ENCODE measurements at regions of chr20 and their contacts with region 1.

Region 1: GRCh38 chr20:1509237-1509636 is 18.0 kb upstream of the SIRPB2 start:
- DNase-seq: peak; percentile 39
- ATAC-seq: peak; percentile 28
- H3K4me3 ChIP-seq: no peak overlapping the region
- H3K4me3 Mint-ChIP-seq: no peak overlapping the region
- H3K27ac ChIP-seq: no peak overlapping the region
- H3K27ac Mint-ChIP-seq: no peak overlapping the region
- H3K4me1 ChIP-seq: no peaks in the 10 kb centered on the region
- H3K4me1 Mint-ChIP-seq: no peaks in the 10 kb centered on the region
- H3K27me3 ChIP-seq: peaks cover 0 to 15% (median 0%) of the 10 kb centered on the region in 4 experiments
- H3K27me3 Mint-ChIP-seq: peaks cover 41% of the 10 kb centered on the region
- CTCF ChIP-seq: peak; percentile 41

Region 2: GRCh38 chr20:1734269-1734858 is 225.1 kb after region 1 on chr20:
- CTCF ChIA-PET with region 1: interaction called, 15 read pairs
- POLR2A ChIA-PET with region 1: no interaction called
- intact Hi-C with region 1: no loop called
- DNase-seq: no peak
- ATAC-seq: no peak
- H3K4me3 ChIP-seq: no peak overlapping the region
- H3K4me3 Mint-ChIP-seq: no peak overlapping the region
- H3K27ac ChIP-seq: no peak overlapping the region
- H3K27ac Mint-ChIP-seq: no peak overlapping the region
- H3K4me1 ChIP-seq: peaks cover 5 to 12% of the 10 kb centered on the region in 2 donors
- H3K4me1 Mint-ChIP-seq: peaks cover 20% of the 10 kb centered on the region
- H3K27me3 ChIP-seq: no peaks in the 10 kb centered on the region
- H3K27me3 Mint-ChIP-seq: peaks cover 14% of the 10 kb centered on the region
- CTCF ChIP-seq: no peak